SK-N-SH (cell line): ENCODE measurements at regions of chr7 and their contacts with region 1.

Region 1: GRCh38 chr7:73879977-73880681 is 19.2 kb downstream of the TMEM270 start:
- DNase-seq: peak; percentile 27
- H3K4me3 ChIP-seq: no peak overlapping the region
- H3K27ac ChIP-seq: no peak overlapping the region
- H3K4me1 ChIP-seq: peaks cover 9 to 14% of the 10 kb centered on the region in 2 experiments; a peak in 3 of 4 replicates
- H3K27me3 ChIP-seq: no peaks in the 10 kb centered on the region
- CTCF ChIP-seq: no peak
- EP300 ChIP-seq: no peak
- RAD21 ChIP-seq: no peak

Region 2: GRCh38 chr7:73851410-73852234 is 28.5 kb before region 1 on chr7:
- CTCF ChIA-PET with region 1: interaction called, 10 read pairs
- POLR2A ChIA-PET with region 1: no interaction called
- DNase-seq: no peak
- H3K4me3 ChIP-seq: peak overlapping the region in 1 of 2 experiments; percentile 17; a peak in 2 of 4 replicates
- H3K27ac ChIP-seq: peak overlapping the region; percentile 1 to 100; a peak in 3 of 4 replicates
- H3K4me1 ChIP-seq: peaks cover 2 to 22% of the 10 kb centered on the region in 2 experiments; a peak in 3 of 4 replicates
- H3K27me3 ChIP-seq: no peaks in the 10 kb centered on the region
- CTCF ChIP-seq: no peak
- EP300 ChIP-seq: peak; percentile 27 to 97; a peak in 2 of 4 replicates
- RAD21 ChIP-seq: no peak

Region 3: GRCh38 chr7:73894733-73895551 is 14.8 kb after region 1 on chr7:
- CTCF ChIA-PET with region 1: interaction called, 11 read pairs
- POLR2A ChIA-PET with region 1: no interaction called
- DNase-seq: peak; percentile 87
- H3K4me3 ChIP-seq: no peak overlapping the region
- H3K27ac ChIP-seq: peak overlapping the region in 1 of 2 experiments; percentile 93; a peak in 2 of 4 replicates
- H3K4me1 ChIP-seq: peaks cover 33 to 36% of the 10 kb centered on the region in 2 experiments; a peak in 3 of 4 replicates
- H3K27me3 ChIP-seq: no peaks in the 10 kb centered on the region
- CTCF ChIP-seq: peak; percentile 35; the same call in 1 of the 2 replicates
- EP300 ChIP-seq: peak; percentile 49 to 99
- RAD21 ChIP-seq: peak; percentile 25; the same call in 1 of the 2 replicates